ENCODE measurements at regions of chr6 and their contacts with region 1.

Region 1: DNA sequence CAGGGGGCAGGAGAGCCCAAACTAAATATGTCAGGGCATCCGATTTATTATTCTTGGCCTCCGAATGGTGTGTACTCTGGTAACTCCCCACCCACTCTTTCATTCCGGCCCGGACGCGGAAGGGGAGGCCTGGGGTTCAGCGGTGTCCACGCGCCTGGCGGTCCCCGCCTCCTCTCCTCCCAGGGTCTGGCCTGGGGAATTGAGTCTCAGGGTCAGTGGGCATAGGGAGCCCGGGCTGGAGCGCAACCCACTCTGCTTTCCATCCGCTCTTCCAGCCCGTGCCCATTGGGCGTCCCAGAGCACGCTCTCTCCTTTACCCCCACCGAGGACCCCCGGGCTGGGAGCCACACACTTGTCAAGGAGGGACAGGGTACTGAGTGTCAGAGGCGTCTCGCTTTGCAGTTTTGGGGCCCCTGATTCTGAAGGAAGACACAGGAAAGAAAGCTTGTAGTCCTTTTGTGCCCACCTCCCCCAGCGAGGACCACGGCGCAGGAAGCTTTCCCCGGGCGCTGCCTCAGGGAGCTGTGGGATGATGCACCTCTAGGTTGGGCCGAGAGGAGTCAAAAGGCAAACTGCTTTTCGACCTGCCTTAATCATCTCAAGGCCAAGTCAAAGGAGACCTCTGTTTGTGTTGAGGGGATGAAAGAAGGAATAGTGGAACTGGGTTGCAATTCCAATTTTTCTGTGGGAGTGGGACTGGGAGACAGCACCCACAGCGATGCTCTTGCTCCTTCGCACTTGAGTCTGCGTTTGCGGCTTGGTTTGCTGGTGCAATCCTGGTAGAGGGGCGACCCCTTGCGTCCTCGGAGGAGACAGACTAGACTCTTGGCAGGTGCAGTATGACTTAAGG is 2.5 kb downstream of the RSPO3 start:
- DNase-seq: peak; percentile 59
- ATAC-seq: peak; percentile 87
- H3K4me3 ChIP-seq: no peak overlapping the region
- H3K27ac ChIP-seq: no peak overlapping the region
- H3K4me1 ChIP-seq: peaks cover 13% of the 10 kb centered on the region
- H3K27me3 ChIP-seq: peaks cover 55% of the 10 kb centered on the region
- CTCF ChIP-seq: peak; percentile 95

Region 2: DNA sequence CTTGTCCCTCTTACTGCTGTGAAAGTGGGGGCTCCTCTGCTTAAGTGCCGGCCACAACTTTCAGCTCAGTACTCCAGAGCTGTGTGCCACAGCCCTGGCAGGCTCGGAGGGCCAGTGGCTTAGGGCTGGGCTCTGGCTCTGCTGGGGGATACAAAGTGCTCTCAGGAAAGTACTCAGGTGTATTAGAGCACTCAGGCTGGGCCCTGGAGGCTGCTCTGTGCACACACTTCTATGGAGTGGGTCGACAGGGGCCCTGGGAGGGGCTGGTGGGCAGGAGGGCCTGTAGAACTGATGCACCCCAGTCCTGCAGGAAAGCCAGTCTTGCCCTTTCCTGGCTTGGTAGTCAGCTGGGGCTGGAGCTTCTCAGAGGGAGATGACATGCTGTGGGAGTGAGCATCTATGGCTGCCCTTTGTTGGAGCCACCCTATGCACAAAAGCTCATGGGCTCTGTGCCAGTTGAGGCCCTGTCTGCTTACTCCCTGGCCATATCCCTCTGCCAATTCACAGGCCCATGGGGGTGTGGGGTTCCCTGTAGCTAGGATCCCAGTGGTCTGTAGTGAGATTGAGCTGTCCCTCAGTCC is 759.1 kb before region 1 on chr6:
- CTCF ChIA-PET with region 1: no interaction called
- POLR2A ChIA-PET with region 1: no interaction called
- in situ Hi-C with region 1: no loop called
- intact Hi-C with region 1: loop called (anchors 10 kb)
- DNase-seq: no peak
- ATAC-seq: peak; percentile 56; the same call in 1 of the 2 replicates
- H3K4me3 ChIP-seq: no peak overlapping the region
- H3K27ac ChIP-seq: no peak overlapping the region
- H3K4me1 ChIP-seq: no peaks in the 10 kb centered on the region
- H3K27me3 ChIP-seq: no peaks in the 10 kb centered on the region
- CTCF ChIP-seq: no peak

Region 3: GRCh38 chr6:126804332-126805064 is 316.5 kb before region 1 on chr6:
- CTCF ChIA-PET with region 1: no interaction called
- POLR2A ChIA-PET with region 1: no interaction called
- in situ Hi-C with region 1: no loop called
- intact Hi-C with region 1: loop called (anchors 5 kb)
- DNase-seq: peak; percentile 35
- ATAC-seq: peak; percentile 84
- H3K4me3 ChIP-seq: no peak overlapping the region
- H3K27ac ChIP-seq: no peak overlapping the region
- H3K4me1 ChIP-seq: no peaks in the 10 kb centered on the region
- H3K27me3 ChIP-seq: no peaks in the 10 kb centered on the region
- CTCF ChIP-seq: peak; percentile 78

Region 4: GRCh38 chr6:127131275-127131674 is 10.3 kb after region 1 on chr6:
- CTCF ChIA-PET with region 1: no interaction called
- POLR2A ChIA-PET with region 1: no interaction called
- in situ Hi-C with region 1: no loop called
- intact Hi-C with region 1: no loop called
- DNase-seq: no peak
- ATAC-seq: no peak
- H3K4me3 ChIP-seq: no peak overlapping the region
- H3K27ac ChIP-seq: no peak overlapping the region
- H3K4me1 ChIP-seq: no peaks in the 10 kb centered on the region
- H3K27me3 ChIP-seq: peaks cover 6% of the 10 kb centered on the region; the same call in 1 of the 2 replicates
- CTCF ChIP-seq: no peak

Region 5: DNA sequence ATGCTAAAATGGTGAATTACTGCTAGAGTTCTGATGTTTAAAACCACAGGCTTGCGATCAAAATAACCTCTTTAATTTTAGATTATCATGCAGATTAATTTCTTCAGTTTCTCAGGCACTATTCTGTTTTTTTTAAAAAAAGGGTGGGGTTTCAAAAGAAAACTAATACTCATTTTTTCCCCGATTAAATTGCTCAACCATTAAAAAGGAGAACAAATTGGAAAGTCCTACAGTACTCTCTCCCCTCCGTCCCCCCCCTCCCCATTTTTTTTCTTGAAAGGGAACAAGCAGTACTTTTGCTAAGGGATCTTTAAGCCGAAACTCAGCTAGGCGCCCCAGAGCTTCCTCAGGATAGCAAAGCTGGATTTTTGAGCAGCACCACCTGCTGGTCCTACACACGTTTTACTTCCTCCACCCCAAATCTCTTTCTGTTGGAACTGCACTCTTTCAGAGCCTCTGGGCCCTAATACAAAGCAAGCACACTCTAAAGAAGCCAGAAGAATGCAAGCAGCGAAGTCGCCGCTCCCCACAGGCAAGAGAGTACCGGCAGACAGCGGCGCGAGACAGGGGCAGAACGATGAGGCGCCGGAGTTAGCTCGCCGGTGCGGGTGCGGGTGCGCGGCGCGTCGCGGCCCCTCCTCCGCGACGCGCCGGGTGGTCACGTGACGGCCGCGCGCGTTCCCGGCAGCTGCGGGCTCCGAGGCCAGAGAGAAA is 145.3 kb after region 1 on chr6 and contains the start of gene RNF146:
- CTCF ChIA-PET with region 1: interaction called, 10 read pairs
- POLR2A ChIA-PET with region 1: no interaction called
- in situ Hi-C with region 1: no loop called
- intact Hi-C with region 1: no loop called
- DNase-seq: peak; percentile 74
- ATAC-seq: peak; percentile 93
- H3K4me3 ChIP-seq: peak within 1 kb of the TSS; percentile 77 to 97
- H3K27ac ChIP-seq: peak within 1 kb of the TSS; percentile 92
- H3K4me1 ChIP-seq: peaks cover 19% of the 10 kb centered on the region
- H3K27me3 ChIP-seq: peaks cover 16% of the 10 kb centered on the region
- CTCF ChIP-seq: peak; percentile 94
- total RNA-seq, gene RNF146: 43.1 TPM

Measured in Panc1 (cell line).